GM12878 (cell line): ENCODE measurements at regions of chrX and their contacts with region 1.

Region 1: DNA sequence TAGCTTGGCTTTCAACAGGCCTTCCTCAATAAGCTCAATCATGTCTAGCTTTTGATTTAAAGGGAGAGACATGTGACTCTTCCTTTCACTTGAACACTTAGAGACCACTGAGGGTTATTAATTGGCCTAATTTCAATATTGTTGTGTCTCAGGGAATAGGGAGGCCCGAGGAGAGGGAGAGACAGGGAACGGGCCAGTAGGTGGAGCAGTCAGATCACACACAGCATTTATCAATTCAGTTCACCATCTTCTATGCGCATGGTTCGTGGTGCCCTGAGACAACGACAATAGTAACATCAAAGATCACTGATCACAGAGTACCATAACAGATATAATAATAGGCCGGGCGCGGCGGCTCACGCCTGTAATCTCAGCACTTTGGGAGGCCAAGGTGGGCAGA is 17.8 kb downstream of the ZNF81 start:
- DNase-seq: no peak
- ATAC-seq: 0 out of 3 replicates have a peak, but pooled peaks have one; percentile 45
- H3K4me3 ChIP-seq: no peak overlapping the region
- H3K27ac ChIP-seq: no peak overlapping the region
- H3K4me1 ChIP-seq: no peaks in the 10 kb centered on the region
- H3K27me3 ChIP-seq: no peaks in the 10 kb centered on the region
- CTCF ChIP-seq: peak in 2 of 3 experiments; percentile 27 to 47; a peak in 3 of 6 replicates
- EP300 ChIP-seq: no peak
- POLR2A ChIP-seq: no peak
- RAD21 ChIP-seq: peak; percentile 40

Region 2: GRCh38 chrX:47958761-47959342 is 104.4 kb after region 1 on chrX:
- CTCF ChIA-PET with region 1: interaction called, 10 read pairs
- POLR2A ChIA-PET with region 1: no interaction called
- RAD21 ChIA-PET with region 1: no interaction called
- SMC1A ChIA-PET with region 1: interaction called, 6 read pairs
- in situ Hi-C with region 1: no loop called
- intact Hi-C with region 1: no loop called
- DNase-seq: no peak
- ATAC-seq: peak; percentile 73
- H3K4me3 ChIP-seq: no peak overlapping the region
- H3K27ac ChIP-seq: no peak overlapping the region
- H3K4me1 ChIP-seq: no peaks in the 10 kb centered on the region
- H3K27me3 ChIP-seq: no peaks in the 10 kb centered on the region
- CTCF ChIP-seq: peak; percentile 10 to 34 (median 33); a peak in 4 of 6 replicates
- EP300 ChIP-seq: no peak
- POLR2A ChIP-seq: no peak
- RAD21 ChIP-seq: peak; percentile 53

Region 3: GRCh38 chrX:48058621-48059295 is 204.3 kb after region 1 on chrX:
- CTCF ChIA-PET with region 1: no interaction called
- POLR2A ChIA-PET with region 1: no interaction called
- RAD21 ChIA-PET with region 1: no interaction called
- SMC1A ChIA-PET with region 1: no interaction called
- in situ Hi-C with region 1: no loop called
- intact Hi-C with region 1: no loop called
- DNase-seq: no peak
- ATAC-seq: no peak
- H3K4me3 ChIP-seq: no peak overlapping the region
- H3K27ac ChIP-seq: no peak overlapping the region
- H3K4me1 ChIP-seq: no peaks in the 10 kb centered on the region
- H3K27me3 ChIP-seq: no peaks in the 10 kb centered on the region
- CTCF ChIP-seq: no peak
- EP300 ChIP-seq: no peak
- POLR2A ChIP-seq: no peak
- RAD21 ChIP-seq: no peak

Region 4: GRCh38 chrX:48966796-48967579 is 1112.5 kb after region 1 on chrX:
- CTCF ChIA-PET with region 1: no interaction called
- POLR2A ChIA-PET with region 1: no interaction called
- RAD21 ChIA-PET with region 1: no interaction called
- SMC1A ChIA-PET with region 1: no interaction called
- in situ Hi-C with region 1: no loop called
- intact Hi-C with region 1: no loop called
- DNase-seq: no peak
- ATAC-seq: no peak
- H3K4me3 ChIP-seq: no peak overlapping the region
- H3K27ac ChIP-seq: no peak overlapping the region
- H3K4me1 ChIP-seq: peaks cover 6% of the 10 kb centered on the region
- H3K27me3 ChIP-seq: no peaks in the 10 kb centered on the region
- CTCF ChIP-seq: no peak
- EP300 ChIP-seq: no peak
- POLR2A ChIP-seq: no peak
- RAD21 ChIP-seq: no peak